Caki2 (cell line): ENCODE measurements at regions of chr10 and their contacts with region 1.

Region 1: GRCh38 chr10:4767033-4767814 is 58.8 kb upstream of the AKR1E2 start:
- DNase-seq: peak; percentile 32

Region 2: DNA sequence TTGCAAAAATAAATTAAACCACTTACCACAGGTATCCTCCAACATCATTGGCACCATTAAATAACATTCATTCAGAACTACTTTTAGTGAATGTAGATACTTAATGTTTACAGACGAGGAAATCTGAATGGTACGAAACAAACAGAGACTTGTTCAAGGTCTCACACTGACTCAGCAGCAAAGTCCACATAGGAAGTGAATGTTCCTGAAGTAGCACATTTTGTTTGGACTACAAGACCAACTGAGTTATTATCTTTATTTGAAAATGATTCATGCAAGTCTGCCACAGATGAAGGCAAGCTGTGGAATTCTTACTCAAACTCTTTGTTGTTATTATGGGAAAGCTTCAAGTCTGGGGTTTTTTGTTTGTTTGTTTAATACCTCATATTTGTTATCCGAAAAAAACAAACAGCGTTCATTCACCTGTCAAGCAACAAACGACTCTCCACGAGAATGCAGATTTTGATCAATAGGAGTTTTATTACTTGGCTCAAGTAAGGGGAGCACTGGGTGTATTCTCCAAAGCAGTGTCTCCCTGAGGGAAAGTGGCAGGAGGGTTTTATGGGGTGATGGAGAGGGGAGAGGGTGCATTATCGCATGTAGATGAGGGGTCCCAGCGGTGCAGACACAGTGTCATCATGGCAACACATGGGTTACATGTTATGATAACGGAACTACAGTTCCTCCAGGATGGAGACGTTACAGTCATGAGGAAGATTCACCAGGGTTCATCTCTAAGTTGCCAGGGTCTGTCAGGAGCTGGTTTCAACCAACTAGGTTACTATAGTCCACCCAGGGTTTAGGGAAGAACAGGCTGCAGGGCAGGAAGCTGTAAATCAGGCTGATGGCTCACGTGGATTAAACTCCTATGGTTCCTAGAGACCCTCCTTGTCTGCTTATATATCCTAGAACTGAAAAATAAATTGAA is 88.9 kb before region 1 on chr10:
- in situ Hi-C with region 1: loop called (anchors 5 kb)
- DNase-seq: peak; percentile 81

Region 3: DNA sequence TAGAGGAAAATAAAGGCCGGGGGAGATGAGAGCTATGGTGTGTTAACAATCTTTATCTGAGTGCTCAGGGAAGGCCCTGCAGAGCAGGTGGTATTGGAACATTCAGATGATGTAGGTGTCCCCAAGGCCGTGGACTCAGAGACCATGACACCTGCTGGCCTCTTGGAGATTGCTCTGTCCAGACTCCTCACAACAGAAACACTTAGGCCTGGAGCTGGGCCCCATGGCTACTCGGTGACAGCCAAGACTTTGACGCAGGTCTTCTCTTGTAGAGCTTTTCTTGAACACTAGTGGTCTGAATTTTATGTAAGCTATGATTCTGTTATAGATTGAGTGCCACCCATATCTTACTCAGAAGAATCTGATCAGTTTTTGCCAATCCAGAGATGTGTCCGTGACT is 72.2 kb after region 1 on chr10:
- in situ Hi-C with region 1: no loop called
- DNase-seq: no peak